CD8-positive, alpha-beta T cell (primary cell): ENCODE measurements at regions of chr7 and their contacts with region 1.

Region 1: DNA sequence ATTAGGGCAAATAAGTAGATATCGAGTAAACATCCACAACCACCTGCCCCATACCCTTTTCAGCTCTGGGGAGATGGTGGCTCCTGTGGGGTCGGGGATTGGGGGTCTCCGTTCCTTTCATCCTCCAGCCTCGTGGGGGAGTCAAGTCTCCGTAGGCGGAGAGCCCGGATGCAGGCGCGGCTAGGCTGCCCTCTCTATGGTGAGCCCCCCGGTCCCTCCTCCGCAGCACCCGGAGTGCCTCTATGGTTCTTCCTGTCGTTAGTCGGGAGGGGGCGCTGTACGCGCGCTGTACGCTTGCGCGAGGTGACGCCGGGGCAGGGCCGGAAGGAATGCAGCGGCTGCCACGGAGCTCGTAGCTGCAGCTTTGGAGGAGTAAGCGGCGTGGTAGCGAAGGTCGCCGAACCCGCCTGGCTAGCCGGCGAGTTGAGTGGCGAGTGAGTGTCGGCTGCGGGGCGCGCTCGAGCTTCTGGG is 14.8 kb upstream of the MMD2 start:
- DNase-seq: peak; percentile 91 to 97 (median 94)
- ATAC-seq: peak; percentile 97
- H3K4me3 ChIP-seq: peak overlapping the region; percentile 62 to 65
- H3K4me3 Mint-ChIP-seq: peak overlapping the region; percentile 95
- H3K27ac ChIP-seq: peak overlapping the region; percentile 66 to 79
- H3K27ac Mint-ChIP-seq: peak overlapping the region; percentile 94
- H3K4me1 ChIP-seq: peaks cover 7% of the 10 kb centered on the region
- H3K4me1 Mint-ChIP-seq: peaks cover 35% of the 10 kb centered on the region
- H3K27me3 ChIP-seq: no peaks in the 10 kb centered on the region
- H3K27me3 Mint-ChIP-seq: no peaks in the 10 kb centered on the region
- CTCF ChIP-seq: peak; percentile 73

Region 2: DNA sequence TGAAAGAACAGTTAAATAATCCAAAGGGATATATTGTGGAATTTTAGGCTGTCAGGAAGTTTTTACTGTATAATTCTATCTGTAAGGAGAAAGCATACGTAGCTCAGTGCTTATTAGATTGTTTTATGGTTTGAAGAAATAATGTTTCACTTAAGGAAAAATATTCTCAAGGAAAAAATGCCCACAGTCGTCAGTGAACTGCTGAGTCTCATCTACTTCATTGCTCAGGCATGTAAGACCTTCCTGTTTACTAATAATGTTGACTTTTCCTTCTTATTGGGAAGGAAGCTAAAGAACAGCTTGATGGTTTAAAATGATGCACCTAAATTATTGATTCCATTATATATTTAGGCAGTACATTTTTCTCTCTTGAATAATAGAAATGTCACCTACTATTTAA is 1368.5 kb before region 1 on chr7:
- CTCF ChIA-PET with region 1: no interaction called
- POLR2A ChIA-PET with region 1: no interaction called
- intact Hi-C with region 1: no loop called
- DNase-seq: no peak
- ATAC-seq: no peak
- H3K4me3 ChIP-seq: no peak overlapping the region
- H3K4me3 Mint-ChIP-seq: no peak overlapping the region
- H3K27ac ChIP-seq: no peak overlapping the region
- H3K27ac Mint-ChIP-seq: no peak overlapping the region
- H3K4me1 ChIP-seq: no peaks in the 10 kb centered on the region
- H3K4me1 Mint-ChIP-seq: no peaks in the 10 kb centered on the region
- H3K27me3 ChIP-seq: peaks cover 0 to 4% of the 10 kb centered on the region in 2 experiments
- H3K27me3 Mint-ChIP-seq: peaks cover 8% of the 10 kb centered on the region
- CTCF ChIP-seq: no peak

Region 3: DNA sequence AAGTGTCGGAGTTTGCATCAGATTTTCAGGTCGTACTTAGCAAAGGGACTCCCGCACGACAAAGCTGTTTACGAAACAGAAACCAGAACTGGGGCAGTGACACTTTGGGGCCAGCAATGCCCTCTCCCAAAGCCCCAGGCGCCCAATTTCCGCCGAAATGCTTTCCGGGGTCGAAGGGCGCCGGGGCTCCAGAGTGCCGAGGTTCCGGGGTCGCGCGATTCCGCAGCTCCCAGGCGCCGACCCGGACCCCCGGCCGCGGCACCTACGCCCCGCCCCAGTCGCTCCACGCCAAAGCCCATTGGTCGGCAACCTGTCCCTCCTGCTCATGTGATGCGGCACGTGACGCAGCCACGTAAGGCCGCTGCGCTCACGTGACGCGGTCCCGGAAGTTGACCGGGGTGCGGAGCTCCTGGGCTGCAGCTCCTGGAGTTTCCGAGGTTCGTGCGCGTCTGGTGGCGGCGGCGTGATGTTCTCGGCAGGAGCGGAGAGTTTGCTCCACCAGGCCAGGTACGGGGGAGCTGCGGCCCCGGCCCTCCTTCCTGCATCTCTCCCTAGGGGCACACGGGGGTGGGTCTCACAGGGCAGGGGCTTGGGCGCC is 198.4 kb before region 1 on chr7 and contains the start of gene AP5Z1:
- CTCF ChIA-PET with region 1: no interaction called
- POLR2A ChIA-PET with region 1: no interaction called
- intact Hi-C with region 1: loop called in 1 of 2 experiments (anchors 1 kb)
- DNase-seq: peak; percentile 90 to 99 (median 95)
- ATAC-seq: peak; percentile 93
- H3K4me3 ChIP-seq: peak within 1 kb of the TSS; percentile 80 to 98
- H3K4me3 Mint-ChIP-seq: peak within 1 kb of the TSS; percentile 99
- H3K27ac ChIP-seq: peak within 1 kb of the TSS; percentile 93 to 94
- H3K27ac Mint-ChIP-seq: peak within 1 kb of the TSS; percentile 99
- H3K4me1 ChIP-seq: peaks cover 25% of the 10 kb centered on the region
- H3K4me1 Mint-ChIP-seq: peaks cover 47% of the 10 kb centered on the region
- H3K27me3 ChIP-seq: no peaks in the 10 kb centered on the region
- H3K27me3 Mint-ChIP-seq: no peaks in the 10 kb centered on the region
- CTCF ChIP-seq: no peak
- total RNA-seq, gene AP5Z1: 129 to 131 TPM

Region 4: DNA sequence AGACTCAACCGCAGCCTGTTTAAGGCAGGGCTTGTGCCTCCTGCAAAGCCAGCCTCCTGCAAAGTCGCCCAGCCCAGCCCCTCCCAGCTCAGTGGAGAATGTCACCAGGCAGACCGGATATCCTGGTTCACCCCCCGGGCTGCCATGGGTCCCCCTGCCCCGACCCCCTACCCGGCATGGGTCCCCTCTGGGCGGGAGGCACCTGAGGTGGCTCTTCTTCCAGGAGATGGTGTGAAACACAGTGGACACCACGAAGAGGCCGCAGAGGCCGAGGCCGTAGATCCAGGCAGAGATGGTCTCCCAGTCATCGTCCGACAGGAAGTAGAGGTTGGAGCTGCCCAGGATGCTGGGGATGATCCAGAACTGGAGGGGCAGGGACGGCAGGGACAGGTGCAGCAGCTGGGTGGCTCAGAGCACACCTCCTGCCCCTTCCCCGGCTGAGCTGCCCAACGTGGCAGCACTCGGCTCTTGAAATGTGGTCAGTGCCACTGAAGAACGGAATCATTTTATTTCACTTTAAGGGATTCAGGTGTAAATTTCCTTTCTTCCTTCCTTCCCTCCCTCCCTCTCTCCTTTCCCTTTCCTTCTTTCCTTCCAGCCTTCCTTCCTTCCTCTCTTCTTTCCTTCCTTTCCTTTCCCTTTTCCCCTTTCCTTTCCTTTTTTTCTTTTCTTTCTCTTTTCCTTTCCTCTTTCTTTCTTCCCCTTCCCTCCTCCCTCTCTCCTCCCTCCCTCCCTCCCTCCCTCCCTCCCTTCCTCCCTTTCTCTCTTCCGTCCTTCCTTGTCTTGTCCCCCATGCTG is 53.6 kb before region 1 on chr7:
- CTCF ChIA-PET with region 1: no interaction called
- POLR2A ChIA-PET with region 1: no interaction called
- intact Hi-C with region 1: no loop called
- DNase-seq: no peak
- ATAC-seq: no peak
- H3K4me3 ChIP-seq: no peak overlapping the region
- H3K4me3 Mint-ChIP-seq: no peak overlapping the region
- H3K27ac ChIP-seq: no peak overlapping the region
- H3K27ac Mint-ChIP-seq: no peak overlapping the region
- H3K4me1 ChIP-seq: no peaks in the 10 kb centered on the region
- H3K4me1 Mint-ChIP-seq: no peaks in the 10 kb centered on the region
- H3K27me3 ChIP-seq: no peaks in the 10 kb centered on the region
- H3K27me3 Mint-ChIP-seq: peaks cover 8% of the 10 kb centered on the region
- CTCF ChIP-seq: no peak

Region 5: GRCh38 chr7:4951903-4952636 is 21.7 kb before region 1 on chr7:
- CTCF ChIA-PET with region 1: no interaction called
- POLR2A ChIA-PET with region 1: no interaction called
- intact Hi-C with region 1: no loop called
- DNase-seq: no peak
- ATAC-seq: no peak
- H3K4me3 ChIP-seq: no peak overlapping the region
- H3K4me3 Mint-ChIP-seq: no peak overlapping the region
- H3K27ac ChIP-seq: no peak overlapping the region
- H3K27ac Mint-ChIP-seq: no peak overlapping the region
- H3K4me1 ChIP-seq: no peaks in the 10 kb centered on the region
- H3K4me1 Mint-ChIP-seq: no peaks in the 10 kb centered on the region
- H3K27me3 ChIP-seq: peaks cover 0 to 7% of the 10 kb centered on the region in 2 experiments
- H3K27me3 Mint-ChIP-seq: peaks cover 42% of the 10 kb centered on the region
- CTCF ChIP-seq: no peak

Region 6: DNA sequence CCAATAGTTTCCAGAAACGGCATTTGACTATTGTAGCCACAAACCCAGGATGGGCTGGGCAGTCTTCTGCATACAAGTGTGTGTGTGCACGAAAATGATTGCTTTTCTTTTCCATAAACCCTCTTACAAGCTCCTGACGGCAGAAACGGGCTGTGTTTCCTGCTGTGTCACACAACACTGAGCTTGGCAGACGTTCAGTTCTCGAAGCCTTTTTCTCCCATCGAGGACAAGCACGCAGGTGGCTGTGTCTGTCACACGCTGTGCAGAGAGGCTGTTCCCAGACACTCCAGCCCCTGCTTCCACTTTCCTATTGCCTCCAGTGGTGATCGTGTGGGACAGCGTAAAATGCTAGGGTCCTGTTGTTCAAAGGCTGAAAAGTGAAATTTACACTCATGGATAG is 104.0 kb after region 1 on chr7:
- CTCF ChIA-PET with region 1: interaction called, 15 read pairs
- POLR2A ChIA-PET with region 1: no interaction called
- intact Hi-C with region 1: no loop called
- DNase-seq: no peak
- ATAC-seq: no peak
- H3K4me3 ChIP-seq: no peak overlapping the region
- H3K4me3 Mint-ChIP-seq: no peak overlapping the region
- H3K27ac ChIP-seq: no peak overlapping the region
- H3K27ac Mint-ChIP-seq: no peak overlapping the region
- H3K4me1 ChIP-seq: no peaks in the 10 kb centered on the region
- H3K4me1 Mint-ChIP-seq: peaks cover 13% of the 10 kb centered on the region
- H3K27me3 ChIP-seq: no peaks in the 10 kb centered on the region
- H3K27me3 Mint-ChIP-seq: peaks cover 8% of the 10 kb centered on the region
- CTCF ChIP-seq: no peak

Region 7: GRCh38 chr7:5170251-5170650 is 196.5 kb after region 1 on chr7:
- CTCF ChIA-PET with region 1: interaction called, 37 read pairs
- POLR2A ChIA-PET with region 1: interaction called, 5 read pairs
- intact Hi-C with region 1: loop called in 1 of 2 experiments (anchors 1 kb)
- DNase-seq: peak in 1 of 9 experiments; percentile 34
- ATAC-seq: no peak
- H3K4me3 ChIP-seq: no peak overlapping the region
- H3K4me3 Mint-ChIP-seq: peak overlapping the region; percentile 32
- H3K27ac ChIP-seq: no peak overlapping the region
- H3K27ac Mint-ChIP-seq: no peak overlapping the region
- H3K4me1 ChIP-seq: no peaks in the 10 kb centered on the region
- H3K4me1 Mint-ChIP-seq: peaks cover 12% of the 10 kb centered on the region
- H3K27me3 ChIP-seq: no peaks in the 10 kb centered on the region
- H3K27me3 Mint-ChIP-seq: no peaks in the 10 kb centered on the region
- CTCF ChIP-seq: no peak

Region 8: DNA sequence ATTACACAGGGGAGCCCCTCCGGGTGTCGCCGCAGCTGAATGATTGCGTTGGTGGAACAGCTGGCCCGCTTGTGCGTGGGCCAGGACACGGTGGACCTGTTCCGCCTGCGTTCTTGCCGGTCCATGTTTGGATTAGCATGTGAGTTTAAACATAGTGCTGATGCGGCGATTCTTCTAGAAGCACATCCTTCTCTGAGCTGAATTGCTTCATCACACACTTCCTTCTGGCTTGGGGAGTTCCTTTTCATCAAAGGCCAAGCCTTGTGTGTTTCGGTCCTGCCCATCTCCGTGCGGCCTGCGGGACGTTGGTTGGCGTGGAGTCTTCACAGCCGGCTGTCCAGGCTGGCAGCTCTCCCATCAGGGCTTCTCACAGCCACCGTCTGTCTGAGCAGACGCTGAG is 263.5 kb after region 1 on chr7:
- CTCF ChIA-PET with region 1: interaction called, 4 read pairs
- POLR2A ChIA-PET with region 1: no interaction called
- intact Hi-C with region 1: loop called in 1 of 2 experiments (anchors 2 kb)
- DNase-seq: no peak
- ATAC-seq: no peak
- H3K4me3 ChIP-seq: no peak overlapping the region
- H3K4me3 Mint-ChIP-seq: no peak overlapping the region
- H3K27ac ChIP-seq: no peak overlapping the region
- H3K27ac Mint-ChIP-seq: no peak overlapping the region
- H3K4me1 ChIP-seq: peaks cover 17% of the 10 kb centered on the region
- H3K4me1 Mint-ChIP-seq: peaks cover 31% of the 10 kb centered on the region
- H3K27me3 ChIP-seq: peaks cover 0 to 7% of the 10 kb centered on the region in 2 experiments
- H3K27me3 Mint-ChIP-seq: peaks cover 18% of the 10 kb centered on the region
- CTCF ChIP-seq: no peak

Region 9: GRCh38 chr7:6577365-6578113 is 1603.8 kb after region 1 on chr7 and contains the start of gene ZDHHC4:
- CTCF ChIA-PET with region 1: no interaction called
- POLR2A ChIA-PET with region 1: no interaction called
- intact Hi-C with region 1: loop called in 1 of 2 experiments (anchors 10 kb)
- DNase-seq: peak; percentile 75 to 95 (median 87)
- ATAC-seq: peak; percentile 90
- H3K4me3 ChIP-seq: peak within 1 kb of the TSS; percentile 83 to 90
- H3K4me3 Mint-ChIP-seq: peak within 1 kb of the TSS; percentile 86
- H3K27ac ChIP-seq: peak within 1 kb of the TSS; percentile 91 to 97
- H3K27ac Mint-ChIP-seq: peak within 1 kb of the TSS; percentile 94
- H3K4me1 ChIP-seq: peaks cover 4% of the 10 kb centered on the region
- H3K4me1 Mint-ChIP-seq: peaks cover 14% of the 10 kb centered on the region
- H3K27me3 ChIP-seq: no peaks in the 10 kb centered on the region
- H3K27me3 Mint-ChIP-seq: peaks cover 2% of the 10 kb centered on the region
- CTCF ChIP-seq: no peak
- total RNA-seq, gene ZDHHC4: 35.6 to 37.0 TPM